Activated CD4-positive, alpha-beta memory T cell treated with anti-CD3 and anti-CD28 coated beads for 36 hours (primary cell): ENCODE measurements at regions of chr12 and their contacts with region 1.

Region 1: GRCh38 chr12:74945771-74946198 is 263.9 kb downstream of the KCNC2 start:
- DNase-seq: no peak
- H3K4me3 Mint-ChIP-seq: no peak overlapping the region
- H3K27ac Mint-ChIP-seq: no peak overlapping the region
- H3K4me1 Mint-ChIP-seq: peaks cover 12% of the 10 kb centered on the region
- H3K27me3 Mint-ChIP-seq: no peaks in the 10 kb centered on the region

Region 2: GRCh38 chr12:74897425-74898211 is 48.2 kb before region 1 on chr12:
- CTCF ChIA-PET with region 1: no interaction called
- POLR2A ChIA-PET with region 1: no interaction called
- intact Hi-C with region 1: loop called (anchors 5 kb)
- DNase-seq: no peak
- H3K4me3 Mint-ChIP-seq: no peak overlapping the region
- H3K27ac Mint-ChIP-seq: peak overlapping the region; percentile 9
- H3K4me1 Mint-ChIP-seq: peaks cover 29% of the 10 kb centered on the region
- H3K27me3 Mint-ChIP-seq: no peaks in the 10 kb centered on the region

Region 3: GRCh38 chr12:74963867-74964331 is 18.1 kb after region 1 on chr12:
- CTCF ChIA-PET with region 1: no interaction called
- POLR2A ChIA-PET with region 1: no interaction called
- intact Hi-C with region 1: no loop called
- DNase-seq: no peak
- H3K4me3 Mint-ChIP-seq: no peak overlapping the region
- H3K27ac Mint-ChIP-seq: no peak overlapping the region
- H3K4me1 Mint-ChIP-seq: no peaks in the 10 kb centered on the region
- H3K27me3 Mint-ChIP-seq: no peaks in the 10 kb centered on the region

Region 4: GRCh38 chr12:75011118-75011517 is 65.3 kb after region 1 on chr12:
- CTCF ChIA-PET with region 1: no interaction called
- POLR2A ChIA-PET with region 1: no interaction called
- intact Hi-C with region 1: no loop called
- DNase-seq: peak; percentile 15
- H3K4me3 Mint-ChIP-seq: no peak overlapping the region
- H3K27ac Mint-ChIP-seq: no peak overlapping the region
- H3K4me1 Mint-ChIP-seq: no peaks in the 10 kb centered on the region
- H3K27me3 Mint-ChIP-seq: no peaks in the 10 kb centered on the region